ENCODE measurements at regions of chr12 and their contacts with region 1.

Region 1: GRCh38 chr12:13362260-13362841 is 165.8 kb downstream of the EMP1 start:
- DNase-seq: peak in 7 of 10 donors; percentile 38 to 90 (median 71)

Region 2: DNA sequence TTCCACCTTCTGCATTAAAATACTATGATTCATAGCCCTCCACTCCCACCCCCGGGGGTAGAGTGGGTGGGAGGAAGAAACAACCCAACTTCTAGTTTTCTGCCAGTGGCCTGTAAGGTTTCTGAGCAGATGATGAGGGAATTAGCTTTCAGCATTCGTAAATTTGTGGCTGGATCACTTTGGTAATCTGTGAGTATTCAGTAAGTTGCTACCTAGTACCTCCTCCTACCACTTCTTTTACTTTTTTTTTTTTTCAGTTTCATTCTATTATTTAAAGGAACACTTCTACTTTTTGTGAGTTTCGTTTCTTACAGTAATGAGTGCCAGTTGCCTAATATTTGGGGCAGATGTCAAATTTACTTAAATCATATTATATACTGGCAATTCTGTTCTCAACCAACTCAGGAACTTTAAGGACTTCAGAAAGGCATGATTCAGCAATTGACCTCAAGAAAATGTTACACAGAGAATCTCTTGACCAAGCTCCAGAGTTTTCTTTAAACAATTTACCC is 208.3 kb before region 1 on chr12:
- intact Hi-C with region 1: no loop called
- DNase-seq: no peak

Region 3: DNA sequence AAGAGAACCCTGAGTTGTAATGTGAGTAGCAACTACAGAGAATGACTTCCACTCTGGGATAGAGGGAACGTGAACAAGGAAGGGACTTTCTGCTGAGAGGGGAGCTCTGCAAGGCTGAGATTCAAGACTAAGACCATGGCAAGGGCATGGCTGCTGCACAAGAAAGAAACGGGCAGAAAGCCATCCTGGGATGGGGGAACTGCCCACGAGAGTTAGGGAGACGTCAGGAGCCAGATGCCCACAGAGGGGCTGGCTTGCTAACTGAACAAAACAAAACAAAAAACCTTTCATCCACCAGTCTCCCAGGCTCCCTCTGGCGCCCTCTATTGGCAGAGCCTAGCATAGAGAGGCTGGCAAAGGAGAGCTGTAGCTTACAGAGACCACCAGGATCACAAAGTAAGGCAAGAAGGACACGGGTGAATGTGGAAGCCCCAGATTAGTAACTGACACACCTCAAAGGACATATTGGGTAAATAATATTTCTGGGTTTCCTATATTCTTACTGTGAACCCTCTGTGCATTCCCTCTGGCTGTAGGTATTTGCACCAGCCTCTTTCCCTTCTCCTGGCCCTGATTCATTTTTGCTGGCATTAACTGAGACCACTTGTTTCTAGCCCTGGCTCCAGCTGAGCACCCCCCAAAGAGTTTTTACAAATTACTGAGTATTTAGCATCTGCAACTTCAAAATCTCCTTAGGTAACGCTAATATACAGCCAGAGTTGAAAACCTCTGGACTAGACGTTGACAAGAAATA is 172.5 kb after region 1 on chr12:
- intact Hi-C with region 1: loop called (anchors 1 kb)
- DNase-seq: peak; percentile 55 to 96 (median 86)

Region 4: DNA sequence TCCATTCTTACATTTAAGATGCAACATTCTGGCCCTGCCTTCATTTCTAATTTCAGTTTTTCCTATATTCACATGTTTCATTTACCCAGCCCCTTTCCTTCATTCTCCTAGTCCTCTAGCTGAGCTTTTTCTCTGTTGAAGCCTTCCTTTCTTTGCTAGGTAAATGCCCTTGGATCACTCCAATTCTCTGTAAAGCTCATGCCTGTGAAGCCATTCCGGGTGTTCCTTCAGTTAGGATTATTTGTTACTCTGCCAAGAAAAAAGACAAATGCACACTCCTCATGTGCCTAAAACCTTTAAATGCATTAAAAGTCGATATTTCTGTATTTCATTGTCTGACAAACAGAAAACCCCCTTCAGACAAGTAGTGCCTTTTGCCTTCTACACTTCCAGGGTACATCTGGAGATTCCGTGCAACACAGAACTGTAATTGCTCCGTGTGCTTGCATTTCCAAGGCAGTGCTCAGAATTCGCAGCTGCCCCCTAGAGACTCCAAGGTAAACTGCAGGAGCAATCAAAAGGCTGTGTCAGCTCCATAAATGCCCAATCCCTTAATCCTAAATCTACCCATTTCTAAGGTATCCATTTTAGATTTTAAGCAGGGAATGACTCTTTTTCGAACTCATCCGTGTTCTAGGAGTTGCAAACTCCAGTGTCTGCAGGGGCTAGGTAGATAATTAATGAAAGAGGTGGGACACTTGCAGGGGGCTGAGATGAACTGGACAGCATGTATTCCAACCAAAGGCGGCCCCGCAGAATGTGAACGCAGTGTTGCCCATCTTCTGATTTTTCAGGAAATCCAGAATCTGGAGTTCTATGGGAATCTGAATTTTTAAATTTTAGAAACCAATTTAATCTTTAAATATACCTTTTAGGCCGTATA is 298.9 kb after region 1 on chr12:
- intact Hi-C with region 1: loop called (anchors 2 kb)
- DNase-seq: peak; percentile 15 to 93 (median 55)